Endothelial cell of umbilical vein (primary cell): ENCODE measurements at regions of chr10 and their contacts with region 1.

Region 1: DNA sequence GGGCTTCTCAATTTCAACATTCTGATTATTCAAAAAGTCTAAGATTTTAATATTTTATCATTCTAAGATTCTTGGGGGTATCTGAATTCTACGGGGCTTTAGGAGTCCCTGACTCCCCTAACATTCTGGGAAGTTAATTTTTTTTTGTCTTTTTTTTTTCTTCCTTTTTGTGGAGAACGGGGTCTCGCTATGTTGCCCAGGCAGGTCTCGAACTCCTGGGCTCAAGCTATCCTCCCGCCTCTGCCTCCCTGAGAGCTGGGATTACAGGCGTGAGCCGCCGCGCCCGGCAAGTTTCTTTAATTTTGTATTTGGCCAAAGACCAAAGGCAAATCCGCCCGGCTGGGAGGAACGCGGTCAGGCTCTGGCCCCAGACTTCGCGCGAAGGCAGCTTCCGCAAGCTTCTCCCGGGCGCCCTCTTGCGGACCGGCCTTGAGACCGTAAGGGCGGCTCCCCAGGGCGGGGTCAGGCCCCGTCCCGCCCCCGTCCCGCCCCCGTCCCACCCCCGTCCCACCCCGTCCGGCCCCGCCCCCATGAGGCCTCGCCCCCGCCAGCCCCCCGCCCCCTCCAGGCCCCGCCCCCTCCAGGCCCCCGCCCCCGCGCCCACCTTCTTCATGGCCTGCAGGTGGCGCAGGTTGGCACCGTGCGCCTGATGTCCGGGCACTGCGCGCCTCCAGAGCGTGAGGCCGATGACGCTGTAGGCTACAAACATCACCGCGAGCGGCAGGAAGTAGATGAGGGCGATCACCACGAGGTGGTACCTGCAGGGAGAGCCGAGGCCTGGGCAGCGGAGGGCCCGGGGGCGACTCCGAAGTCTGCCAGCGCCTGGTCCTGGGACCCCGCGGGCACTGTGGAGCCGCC is 8.2 kb downstream of the TACR2 start:
- DNase-seq: peak; percentile 80
- H3K4me3 ChIP-seq: peak overlapping the region in 2 of 3 experiments; percentile 23 to 26
- H3K27ac ChIP-seq: peak overlapping the region; percentile 20
- H3K4me1 ChIP-seq: peaks cover 17% of the 10 kb centered on the region
- H3K27me3 ChIP-seq: no peaks in the 10 kb centered on the region
- CTCF ChIP-seq: peak; percentile 31 to 76
- POLR2A ChIP-seq: peak; percentile 17

Region 2: GRCh38 chr10:69004821-69005220 is 403.7 kb before region 1 on chr10:
- CTCF ChIA-PET with region 1: interaction called, 5 read pairs
- POLR2A ChIA-PET with region 1: no interaction called
- dilution Hi-C with region 1: no loop called
- intact Hi-C with region 1: loop called (anchors 5 kb)
- DNase-seq: peak; percentile 61
- H3K4me3 ChIP-seq: no peak overlapping the region
- H3K27ac ChIP-seq: no peak overlapping the region
- H3K4me1 ChIP-seq: no peaks in the 10 kb centered on the region
- H3K27me3 ChIP-seq: no peaks in the 10 kb centered on the region
- CTCF ChIP-seq: peak; percentile 38
- POLR2A ChIP-seq: no peak

Region 3: GRCh38 chr10:69232252-69232651 is 176.3 kb before region 1 on chr10:
- CTCF ChIA-PET with region 1: interaction called, 16 read pairs
- POLR2A ChIA-PET with region 1: no interaction called
- dilution Hi-C with region 1: no loop called
- intact Hi-C with region 1: loop called (anchors 1 kb)
- DNase-seq: no peak
- H3K4me3 ChIP-seq: no peak overlapping the region
- H3K27ac ChIP-seq: no peak overlapping the region
- H3K4me1 ChIP-seq: peaks cover 12% of the 10 kb centered on the region
- H3K27me3 ChIP-seq: no peaks in the 10 kb centered on the region
- CTCF ChIP-seq: no peak
- POLR2A ChIP-seq: no peak

Region 4: DNA sequence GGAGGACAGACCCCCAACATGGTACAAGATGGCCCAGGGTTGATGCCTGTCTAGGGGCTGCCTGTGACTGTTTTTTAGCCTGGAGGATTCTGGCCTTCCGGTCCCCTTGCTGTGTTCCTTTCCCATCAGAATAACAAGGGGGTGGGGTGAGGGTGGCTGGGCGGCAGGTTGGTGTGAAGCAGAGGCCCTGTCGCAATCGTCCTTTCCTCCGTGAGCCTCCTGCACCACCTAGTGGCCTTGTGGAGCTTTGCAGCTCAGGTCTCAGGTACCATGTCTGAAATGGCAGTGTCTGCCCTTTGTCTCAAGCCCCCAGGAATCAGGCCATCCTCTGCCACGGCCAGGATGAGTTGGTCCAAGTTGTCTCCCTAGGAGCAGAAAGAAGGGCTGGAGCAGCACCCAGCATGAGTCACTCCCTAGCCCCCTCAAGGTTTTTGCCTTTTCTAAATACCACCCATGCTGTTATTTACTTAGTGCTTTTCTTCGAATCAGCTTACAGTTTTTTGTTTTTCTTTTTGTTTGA is 16.0 kb before region 1 on chr10:
- CTCF ChIA-PET with region 1: interaction called, 21 read pairs
- POLR2A ChIA-PET with region 1: interaction called, 4 read pairs
- dilution Hi-C with region 1: no loop called
- intact Hi-C with region 1: no loop called
- DNase-seq: peak; percentile 78
- H3K4me3 ChIP-seq: no peak overlapping the region
- H3K27ac ChIP-seq: no peak overlapping the region
- H3K4me1 ChIP-seq: peaks cover 4% of the 10 kb centered on the region
- H3K27me3 ChIP-seq: no peaks in the 10 kb centered on the region
- CTCF ChIP-seq: peak; percentile 92 to 93
- POLR2A ChIP-seq: no peak

Region 5: DNA sequence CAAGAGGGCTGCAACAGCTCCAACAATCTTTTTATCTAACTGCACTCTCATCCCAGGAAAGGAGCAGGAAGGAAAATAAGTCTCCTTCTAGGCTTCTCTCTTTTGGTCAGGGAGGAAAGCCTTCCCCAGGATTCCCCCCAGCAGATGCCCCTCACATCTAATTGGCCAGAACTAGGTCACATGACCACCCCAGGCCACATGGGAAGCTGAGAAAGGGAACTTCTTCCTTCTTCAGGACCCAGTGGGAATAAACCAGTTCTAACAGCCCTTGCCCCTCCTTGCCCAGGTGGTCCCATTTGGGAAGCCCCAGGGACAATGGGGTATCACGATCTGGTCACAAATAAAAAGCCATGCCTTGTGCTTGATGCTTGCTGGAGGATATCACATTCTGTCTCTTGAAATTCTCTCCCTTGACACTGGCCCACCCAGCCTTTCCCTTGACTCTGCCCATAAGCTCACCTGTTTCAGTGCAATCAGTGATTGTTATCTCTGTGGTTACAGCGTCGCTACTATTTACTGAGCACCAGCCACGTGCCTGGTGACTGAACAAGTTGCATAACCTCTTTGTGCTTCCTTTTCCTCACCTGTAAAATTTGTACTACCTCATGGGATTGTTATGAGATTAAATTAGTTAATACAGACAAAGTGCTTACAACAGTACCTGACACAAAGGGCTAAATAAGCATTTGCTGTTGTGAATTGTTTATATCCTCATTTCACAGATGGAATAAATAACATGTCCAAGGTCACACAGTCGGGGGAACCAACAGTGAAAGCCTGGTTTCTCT is 17.2 kb after region 1 on chr10:
- CTCF ChIA-PET with region 1: interaction called, 13 read pairs
- POLR2A ChIA-PET with region 1: no interaction called
- dilution Hi-C with region 1: no loop called
- intact Hi-C with region 1: no loop called
- DNase-seq: no peak
- H3K4me3 ChIP-seq: no peak overlapping the region
- H3K27ac ChIP-seq: no peak overlapping the region
- H3K4me1 ChIP-seq: no peaks in the 10 kb centered on the region
- H3K27me3 ChIP-seq: peaks cover 0 to 1% of the 10 kb centered on the region in 2 experiments
- CTCF ChIP-seq: no peak
- POLR2A ChIP-seq: no peak

Region 6: GRCh38 chr10:69506834-69507721 is 98.5 kb after region 1 on chr10:
- CTCF ChIA-PET with region 1: interaction called, 86 read pairs
- POLR2A ChIA-PET with region 1: no interaction called
- dilution Hi-C with region 1: no loop called
- intact Hi-C with region 1: loop called (anchors 1 kb)
- DNase-seq: peak; percentile 11
- H3K4me3 ChIP-seq: no peak overlapping the region
- H3K27ac ChIP-seq: no peak overlapping the region
- H3K4me1 ChIP-seq: peaks cover 7% of the 10 kb centered on the region
- H3K27me3 ChIP-seq: no peaks in the 10 kb centered on the region
- CTCF ChIP-seq: no peak
- POLR2A ChIP-seq: no peak

Region 7: DNA sequence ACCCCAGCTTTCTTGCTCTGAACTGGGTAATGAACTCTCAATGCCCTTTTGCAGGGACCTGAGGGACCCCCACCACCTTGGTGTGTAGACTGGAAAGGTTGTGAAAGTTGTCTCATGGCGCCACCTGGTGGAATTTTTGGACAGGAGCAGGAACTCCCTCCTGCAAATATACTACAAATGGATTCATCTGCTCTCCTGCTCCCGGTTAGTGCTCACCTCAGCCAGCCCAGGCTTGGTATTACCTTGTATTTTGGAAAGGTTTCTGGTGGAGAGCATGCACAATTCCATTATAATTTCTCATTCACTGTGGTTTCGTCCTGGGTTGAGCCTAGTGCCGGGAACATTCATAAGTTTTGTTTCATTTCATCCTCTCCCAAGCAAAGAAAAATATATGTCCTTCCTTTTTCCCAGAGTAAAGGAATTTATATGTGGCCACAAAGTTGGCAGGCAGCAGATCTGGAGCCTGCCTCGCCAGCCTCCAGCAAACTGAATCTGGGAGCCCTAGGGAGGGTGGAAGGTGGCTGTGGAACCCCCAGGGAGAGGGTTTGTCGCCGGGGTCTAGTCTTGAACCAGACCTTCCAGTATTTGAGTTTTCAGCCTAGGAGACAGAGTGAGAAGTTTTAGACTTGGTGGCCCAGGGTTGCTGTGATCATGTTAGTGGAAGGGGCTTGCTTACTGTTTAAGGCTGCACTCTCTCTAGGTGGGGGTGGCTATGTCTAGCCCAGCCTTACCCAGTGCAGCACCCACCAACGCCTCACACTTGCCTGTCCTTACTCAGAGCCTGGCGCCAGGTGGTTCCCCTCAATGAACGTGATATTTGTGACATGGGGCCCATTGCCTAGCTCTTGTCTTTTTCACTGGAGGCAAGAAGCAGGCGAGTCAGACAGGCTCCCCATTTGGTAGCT is 231.0 kb after region 1 on chr10:
- CTCF ChIA-PET with region 1: interaction called, 52 read pairs
- POLR2A ChIA-PET with region 1: no interaction called
- dilution Hi-C with region 1: no loop called
- intact Hi-C with region 1: loop called (anchors 1 kb)
- DNase-seq: peak; percentile 58
- H3K4me3 ChIP-seq: no peak overlapping the region
- H3K27ac ChIP-seq: no peak overlapping the region
- H3K4me1 ChIP-seq: no peaks in the 10 kb centered on the region
- H3K27me3 ChIP-seq: peaks cover 3 to 9% of the 10 kb centered on the region in 2 experiments
- CTCF ChIP-seq: peak; percentile 78 to 82
- POLR2A ChIP-seq: no peak